ENCODE measurements at regions of chr13 and their contacts with region 1.

Region 1: GRCh38 chr13:41668130-41668757 is 210.9 kb downstream of the RGCC start:
- DNase-seq: peak; percentile 61
- H3K4me3 ChIP-seq: no peak overlapping the region; a peak in 1 of 4 replicates
- H3K27ac ChIP-seq: 0 out of 4 replicates have a peak overlapping the region, but pooled peaks of 1 of the 2 experiments have one; percentile 6
- H3K4me1 ChIP-seq: peaks cover 0 to 3% of the 10 kb centered on the region in 2 experiments; a peak in 2 of 4 replicates
- H3K27me3 ChIP-seq: no peaks in the 10 kb centered on the region
- CTCF ChIP-seq: peak; percentile 87
- EP300 ChIP-seq: no peak
- RAD21 ChIP-seq: peak; percentile 99

Region 2: DNA sequence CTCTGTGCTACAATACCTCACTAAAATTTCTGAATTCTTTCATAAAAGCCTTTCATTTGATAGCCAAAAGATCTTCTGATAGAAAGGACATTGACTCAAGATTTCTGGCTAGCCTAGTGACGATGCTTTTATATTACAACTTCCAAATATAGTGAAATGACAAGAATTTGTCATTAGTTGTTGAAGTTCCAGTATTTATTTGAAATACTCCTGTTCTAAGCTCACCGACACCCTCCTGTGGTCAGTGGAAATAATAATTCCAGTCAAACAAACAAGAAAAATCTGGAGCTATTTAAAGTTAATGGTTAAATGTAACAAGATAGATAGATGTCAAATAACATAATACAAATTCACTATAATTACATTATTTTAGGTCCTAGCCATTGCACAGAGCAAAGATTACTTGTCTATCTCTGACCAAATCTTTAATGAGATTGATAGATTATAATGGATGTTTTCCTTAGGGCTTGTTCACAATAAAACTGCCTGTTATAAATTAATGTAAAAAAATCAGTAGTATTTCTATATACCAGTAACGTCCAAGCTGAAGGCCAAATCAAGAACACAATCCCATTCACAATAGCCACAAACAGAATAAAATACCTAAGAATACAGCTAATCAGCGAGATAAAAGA is 15.4 kb before region 1 on chr13:
- CTCF ChIA-PET with region 1: interaction called, 67 read pairs
- POLR2A ChIA-PET with region 1: no interaction called
- DNase-seq: peak; percentile 60
- H3K4me3 ChIP-seq: no peak overlapping the region
- H3K27ac ChIP-seq: no peak overlapping the region
- H3K4me1 ChIP-seq: peaks cover 3 to 11% of the 10 kb centered on the region in 2 experiments
- H3K27me3 ChIP-seq: no peaks in the 10 kb centered on the region
- CTCF ChIP-seq: peak; percentile 83
- EP300 ChIP-seq: peak in 1 of 2 experiments; percentile 16; a peak in 1 of 4 replicates
- RAD21 ChIP-seq: peak; percentile 91

Region 3: GRCh38 chr13:41658056-41658661 is 10.1 kb before region 1 on chr13:
- CTCF ChIA-PET with region 1: interaction called, 67 read pairs
- POLR2A ChIA-PET with region 1: no interaction called
- DNase-seq: no peak
- H3K4me3 ChIP-seq: no peak overlapping the region
- H3K27ac ChIP-seq: no peak overlapping the region
- H3K4me1 ChIP-seq: no peaks in the 10 kb centered on the region
- H3K27me3 ChIP-seq: no peaks in the 10 kb centered on the region
- CTCF ChIP-seq: no peak
- EP300 ChIP-seq: no peak
- RAD21 ChIP-seq: no peak

Region 4: GRCh38 chr13:41678249-41678648 is 10.0 kb after region 1 on chr13:
- CTCF ChIA-PET with region 1: interaction called, 28 read pairs
- POLR2A ChIA-PET with region 1: no interaction called
- DNase-seq: no peak
- H3K4me3 ChIP-seq: no peak overlapping the region
- H3K27ac ChIP-seq: peak overlapping the region; percentile 22 to 37; a peak in 2 of 4 replicates
- H3K4me1 ChIP-seq: no peaks in the 10 kb centered on the region; a peak in 3 of 4 replicates
- H3K27me3 ChIP-seq: no peaks in the 10 kb centered on the region
- CTCF ChIP-seq: no peak
- EP300 ChIP-seq: no peak
- RAD21 ChIP-seq: no peak

Region 5: DNA sequence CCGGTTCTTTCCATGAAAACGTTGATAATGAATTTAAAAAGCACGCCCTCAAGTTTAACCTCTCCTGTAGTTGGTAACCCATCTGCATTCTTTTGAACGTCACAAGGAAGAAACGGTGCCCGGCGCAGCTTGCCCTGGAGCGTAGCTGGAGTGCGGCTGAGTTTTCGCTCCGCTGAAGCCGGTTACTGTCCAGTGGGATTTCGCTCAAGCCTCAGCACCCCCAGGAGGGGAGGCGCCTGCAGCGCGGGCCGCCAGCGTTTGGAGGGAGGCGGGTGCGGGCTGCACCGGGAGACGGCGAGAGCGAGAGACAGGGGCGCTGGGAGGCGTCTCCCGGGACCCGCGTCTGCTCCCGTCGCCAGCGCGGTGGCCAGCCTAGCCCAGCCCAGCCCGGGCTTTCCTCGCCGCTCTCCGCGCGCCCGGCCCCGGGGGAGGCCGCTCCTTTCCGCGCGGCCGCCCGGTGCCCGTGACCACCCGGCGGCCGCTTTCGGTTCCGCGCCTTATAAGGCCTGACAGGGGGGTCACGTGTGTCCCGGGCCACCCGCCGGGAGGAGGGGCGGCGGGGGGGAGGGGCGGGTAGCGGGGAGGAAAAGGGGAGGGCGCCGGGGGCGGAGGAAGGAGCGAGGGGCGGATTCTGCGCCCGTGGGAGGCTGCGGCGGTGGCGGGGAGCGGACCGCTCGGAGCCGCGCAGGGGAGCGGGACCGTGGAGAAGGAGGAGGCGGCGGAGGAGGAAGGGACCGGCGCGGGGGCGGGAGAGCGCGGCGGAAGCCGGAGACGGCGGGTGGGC is 371.9 kb after region 1 on chr13:
- CTCF ChIA-PET with region 1: interaction called, 17 read pairs
- POLR2A ChIA-PET with region 1: no interaction called
- DNase-seq: peak; percentile 99
- H3K4me3 ChIP-seq: peak overlapping the region; percentile 67 to 79
- H3K27ac ChIP-seq: peak overlapping the region; percentile 78 to 84
- H3K4me1 ChIP-seq: peaks cover 4 to 11% of the 10 kb centered on the region in 2 experiments; a peak in 2 of 4 replicates
- H3K27me3 ChIP-seq: no peaks in the 10 kb centered on the region
- CTCF ChIP-seq: no peak
- EP300 ChIP-seq: no peak
- RAD21 ChIP-seq: peak; percentile 18; the same call in 1 of the 2 replicates

Region 6: DNA sequence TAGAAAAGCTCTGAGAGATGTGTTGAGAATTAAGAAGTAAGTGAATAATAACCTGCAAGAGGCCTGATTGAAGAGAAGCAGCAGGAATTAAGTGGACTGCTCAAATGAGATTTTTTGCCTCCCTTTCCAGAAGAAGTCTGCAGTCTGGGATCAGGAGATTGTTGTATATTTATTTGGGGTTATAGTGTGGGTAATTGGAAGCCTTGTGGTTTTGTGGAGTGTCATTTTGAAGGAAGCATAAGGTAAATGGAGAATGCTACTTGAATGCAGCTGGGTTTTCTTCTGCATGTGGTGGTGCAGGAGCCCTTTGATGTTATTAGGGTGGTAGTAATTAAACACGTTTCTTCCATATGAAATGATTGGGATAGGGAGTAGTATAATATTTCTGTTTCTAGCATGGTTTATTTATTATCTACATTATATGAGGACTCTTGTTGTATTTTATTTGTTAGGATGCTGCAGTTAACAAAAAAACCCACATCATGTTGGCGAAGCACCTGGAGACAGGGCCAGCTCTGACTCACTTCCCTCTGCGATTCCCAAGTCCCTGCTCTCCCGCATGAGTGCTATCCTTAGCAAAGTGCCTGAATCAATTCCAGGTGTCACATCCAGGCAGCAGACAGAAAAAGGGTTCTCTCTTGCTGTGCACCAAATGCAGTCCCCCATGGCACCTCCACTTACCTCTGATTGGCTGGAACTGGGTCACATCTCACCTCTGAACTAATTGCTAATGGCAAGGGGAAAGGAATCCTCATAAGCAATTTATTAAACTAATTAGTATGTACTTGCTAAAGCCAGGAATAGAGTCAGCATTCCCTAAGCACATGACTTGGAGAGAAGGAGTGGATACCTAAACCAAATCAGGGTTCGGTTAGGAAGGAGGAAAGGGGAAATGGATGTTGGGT is 435.0 kb after region 1 on chr13:
- CTCF ChIA-PET with region 1: interaction called, 22 read pairs
- POLR2A ChIA-PET with region 1: no interaction called
- DNase-seq: no peak
- H3K4me3 ChIP-seq: no peak overlapping the region
- H3K27ac ChIP-seq: no peak overlapping the region
- H3K4me1 ChIP-seq: peaks cover 2 to 13% of the 10 kb centered on the region in 2 experiments; a peak in 3 of 4 replicates
- H3K27me3 ChIP-seq: no peaks in the 10 kb centered on the region
- CTCF ChIP-seq: no peak
- EP300 ChIP-seq: no peak; a peak in 1 of 4 replicates
- RAD21 ChIP-seq: no peak

Region 7: DNA sequence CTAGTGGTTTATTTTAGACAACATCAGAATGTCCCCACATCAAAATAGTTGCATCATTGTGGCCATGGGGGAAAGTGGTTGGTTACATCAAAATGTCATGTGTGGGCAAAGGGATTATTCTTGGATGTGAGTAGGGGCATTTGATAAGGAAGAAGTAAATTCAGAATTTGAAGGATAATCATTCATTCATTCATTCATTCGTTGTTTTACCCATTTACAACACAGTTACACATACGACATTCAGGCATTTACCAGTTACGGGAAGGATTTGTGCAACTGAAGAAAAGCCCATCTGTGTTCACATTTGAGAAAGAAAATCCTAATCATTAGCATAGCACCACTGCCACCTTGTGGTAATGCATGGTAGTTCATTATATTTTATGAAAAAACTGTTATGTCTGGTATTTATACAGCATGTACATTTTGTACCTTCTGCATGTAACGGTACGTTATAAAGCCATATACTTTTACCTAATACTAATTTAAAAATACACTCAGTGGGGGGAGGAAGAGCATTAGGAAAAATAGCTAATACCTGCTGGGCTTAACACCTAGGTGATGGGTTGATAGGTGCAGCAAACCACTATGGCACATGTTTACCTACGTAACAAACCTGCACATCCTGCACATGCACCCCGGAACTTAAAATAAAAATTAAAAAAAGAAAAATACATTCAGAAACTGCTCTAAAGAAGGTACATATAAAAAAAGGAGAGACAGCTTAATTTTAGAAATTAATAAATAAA is 442.3 kb after region 1 on chr13:
- CTCF ChIA-PET with region 1: interaction called, 92 read pairs
- POLR2A ChIA-PET with region 1: no interaction called
- DNase-seq: peak; percentile 55
- H3K4me3 ChIP-seq: no peak overlapping the region; a peak in 1 of 4 replicates
- H3K27ac ChIP-seq: no peak overlapping the region
- H3K4me1 ChIP-seq: peaks cover 9 to 11% of the 10 kb centered on the region in 2 experiments; a peak in 3 of 4 replicates
- H3K27me3 ChIP-seq: no peaks in the 10 kb centered on the region
- CTCF ChIP-seq: peak; percentile 81
- EP300 ChIP-seq: no peak
- RAD21 ChIP-seq: peak; percentile 94

Measured in SK-N-SH (cell line).